ENCODE measurements at regions of chr9 and their contacts with region 1.

Region 1: DNA sequence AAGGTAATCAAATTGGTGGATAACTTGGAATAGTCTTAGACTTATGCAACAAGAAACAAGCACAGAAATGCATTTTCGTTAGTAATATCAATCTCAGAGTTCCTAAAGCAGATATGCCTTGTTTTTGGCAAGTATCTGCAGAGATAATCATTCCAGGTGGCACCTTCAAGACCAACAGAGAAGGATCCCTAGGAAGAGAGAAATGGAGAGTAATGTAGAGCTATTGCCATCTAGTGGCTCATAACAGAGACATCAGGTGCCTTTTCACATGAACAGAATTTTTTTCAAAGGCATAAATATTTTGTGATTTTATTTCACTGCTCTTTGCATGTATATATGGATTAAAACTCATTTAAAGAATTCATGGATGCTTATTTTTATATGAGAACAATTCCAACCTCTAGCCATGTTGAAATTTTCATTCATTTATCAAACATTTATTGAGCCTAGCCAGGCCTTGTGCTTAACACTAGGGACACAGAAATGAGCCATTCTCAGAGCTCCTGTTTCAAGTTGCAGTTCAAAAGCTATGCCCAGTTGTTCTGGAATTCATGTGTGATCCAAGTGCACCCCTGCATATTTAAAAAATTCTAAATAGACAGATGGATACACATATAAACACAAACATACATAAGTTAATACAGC is 117.5 kb upstream of the OR13F1 start:
- DNase-seq: no peak
- ATAC-seq: peak; percentile 90

Region 2: DNA sequence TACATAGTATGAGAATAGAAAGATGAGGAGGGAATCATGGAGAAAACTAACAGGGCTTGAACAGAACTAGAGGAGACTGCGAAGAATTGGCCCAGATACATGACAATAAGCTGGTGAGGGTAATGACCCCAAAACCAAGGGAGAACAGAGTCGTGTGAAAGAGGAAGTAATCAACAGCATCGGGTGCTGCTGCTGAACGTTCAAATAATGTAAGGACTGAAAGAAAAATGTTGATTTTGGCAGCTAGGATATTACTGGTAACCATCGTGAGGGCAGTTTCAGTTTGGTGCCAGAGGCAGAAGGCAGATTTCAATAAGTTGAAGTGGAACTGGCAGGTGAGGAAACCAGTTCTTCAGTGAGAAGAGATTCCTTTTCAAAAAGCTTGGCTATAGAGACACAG is 359.3 kb before region 1 on chr9:
- intact Hi-C with region 1: loop called in 1 of 2 experiments (anchors 10 kb)
- DNase-seq: no peak
- ATAC-seq: no peak

Region 3: GRCh38 chr9:104435059-104435458 is 48.5 kb after region 1 on chr9:
- intact Hi-C with region 1: no loop called
- DNase-seq: no peak
- ATAC-seq: no peak

Measured in left colon (tissue), 2 donors.